Posterior vena cava (tissue), 2 donors: ENCODE measurements at regions of chr17 and their contacts with region 1.

Region 1: GRCh38 chr17:7851438-7852256 is 3.2 kb upstream of the TMEM88 start:
- DNase-seq: peak; percentile 97

Region 2: DNA sequence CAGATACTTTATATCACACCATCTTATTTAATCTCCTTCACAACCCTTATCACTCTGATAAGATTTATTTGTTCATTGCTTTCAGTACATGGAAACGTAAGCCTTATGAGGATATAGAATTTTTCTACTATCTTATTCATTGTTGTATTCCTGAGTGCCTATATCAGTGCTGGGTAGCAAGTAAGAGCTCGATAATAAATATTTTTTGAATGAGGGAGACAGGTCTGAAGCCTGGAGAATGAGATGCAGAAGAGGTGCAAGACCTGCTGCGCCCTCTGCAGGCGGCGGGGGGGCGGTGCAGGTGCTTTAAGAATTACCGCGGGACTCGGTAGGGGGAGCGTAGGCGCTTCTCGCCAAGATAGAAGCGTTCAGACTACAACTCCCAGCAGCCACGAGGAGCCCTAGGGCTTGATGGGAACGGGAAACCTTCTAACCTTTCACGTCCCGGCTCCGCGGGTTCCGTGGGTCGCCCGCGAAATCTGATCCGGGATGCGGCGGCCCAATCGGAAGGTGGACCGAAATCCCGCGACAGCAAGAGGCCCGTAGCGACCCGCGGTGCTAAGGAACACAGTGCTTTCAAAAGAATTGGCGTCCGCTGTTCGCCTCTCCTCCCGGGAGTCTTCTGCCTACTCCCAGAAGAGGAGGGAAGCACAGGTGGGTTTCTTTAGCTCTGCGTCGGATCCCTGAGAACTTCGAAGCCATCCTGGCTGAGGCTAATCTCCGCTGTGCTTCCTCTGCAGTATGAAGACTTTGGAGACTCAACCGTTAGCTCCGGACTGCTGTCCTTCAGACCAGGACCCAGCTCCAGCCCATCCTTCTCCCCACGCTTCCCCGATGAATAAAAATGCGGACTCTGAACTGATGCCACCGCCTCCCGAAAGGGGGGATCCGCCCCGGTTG is 163.5 kb before region 1 on chr17 and contains the start of gene WRAP53:
- intact Hi-C with region 1: no loop called
- DNase-seq: peak; percentile 99
- total RNA-seq, gene WRAP53: 4.8 to 5.0 TPM

Region 3: GRCh38 chr17:7790150-7790549 is 61.5 kb before region 1 on chr17:
- intact Hi-C with region 1: loop called in 1 of 2 experiments (anchors 2 kb)
- DNase-seq: peak; percentile 55

Region 4: GRCh38 chr17:7818746-7819645 is 32.7 kb before region 1 on chr17:
- intact Hi-C with region 1: loop called in 1 of 2 experiments (anchors 2 kb)
- DNase-seq: no peak

Region 5: GRCh38 chr17:7834962-7835813 is 16.5 kb before region 1 on chr17:
- intact Hi-C with region 1: no loop called
- DNase-seq: peak; percentile 99